HepG2 (cell line): ENCODE measurements at regions of chr11 and their contacts with region 1.

Region 1: GRCh38 chr11:27698872-27699474 is 1.3 kb downstream of the BDNF start:
- DNase-seq: peak; percentile 43
- ATAC-seq: peak; percentile 90
- H3K4me3 ChIP-seq: peak overlapping the region in 1 of 3 experiments; percentile 26; a peak in 1 of 6 replicates
- H3K27ac ChIP-seq: no peak overlapping the region
- H3K4me1 ChIP-seq: peaks cover 29% of the 10 kb centered on the region
- H3K27me3 ChIP-seq: peaks cover 0 to 36% of the 10 kb centered on the region in 2 experiments; a peak in 3 of 5 replicates
- CTCF ChIP-seq: peak; percentile 83
- EP300 ChIP-seq: no peak
- POLR2A ChIP-seq: no peak
- RAD21 ChIP-seq: peak; percentile 39; the same call in 1 of the 2 replicates

Region 2: DNA sequence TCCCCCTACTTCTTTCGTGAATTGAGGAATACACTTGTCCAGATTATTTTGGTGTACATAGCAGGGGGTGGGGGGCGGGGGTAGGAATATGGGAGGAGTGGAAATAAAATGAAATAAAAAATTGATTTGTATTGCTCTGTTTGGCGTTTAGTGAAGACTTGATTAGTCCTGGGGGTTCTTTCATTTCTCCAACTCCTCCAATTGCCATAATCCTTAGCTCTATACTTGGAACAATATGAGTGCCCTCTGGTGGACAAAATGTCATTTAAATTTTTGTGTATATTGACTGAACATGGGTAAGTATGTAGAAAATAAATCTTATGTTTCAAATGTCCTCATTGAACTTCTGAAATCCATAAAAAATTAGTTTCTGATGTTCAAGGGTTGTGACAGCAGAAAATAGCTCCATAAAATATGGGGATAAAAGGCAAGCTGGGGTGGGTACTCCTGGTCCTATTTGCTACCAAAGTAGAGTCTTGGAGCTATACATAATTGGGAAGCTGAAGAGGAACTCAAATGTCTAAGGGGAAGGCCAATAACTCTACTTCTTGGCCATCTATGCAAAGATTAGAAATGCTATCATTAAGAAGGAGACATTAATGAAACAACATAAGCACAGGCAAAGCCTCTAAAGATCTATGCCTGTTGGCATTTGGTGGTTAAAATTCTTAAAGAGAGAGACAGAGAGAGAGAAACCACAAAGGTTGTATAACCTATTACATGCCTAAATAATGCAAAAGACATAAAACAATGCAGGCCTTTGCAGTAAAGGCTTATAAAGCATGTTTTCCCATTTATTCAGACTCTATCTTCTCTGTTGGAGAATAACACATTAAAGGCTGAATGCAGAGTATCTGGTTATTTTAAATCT is 830.8 kb after region 1 on chr11:
- CTCF ChIA-PET with region 1: interaction called, 13 read pairs
- POLR2A ChIA-PET with region 1: no interaction called
- in situ Hi-C with region 1: loop called (anchors 5 kb)
- intact Hi-C with region 1: loop called (anchors 1 kb)
- DNase-seq: peak; percentile 50
- ATAC-seq: peak; percentile 67; the same call in 2 of the 3 replicates
- H3K4me3 ChIP-seq: no peak overlapping the region
- H3K27ac ChIP-seq: no peak overlapping the region
- H3K4me1 ChIP-seq: no peaks in the 10 kb centered on the region
- H3K27me3 ChIP-seq: no peaks in the 10 kb centered on the region
- CTCF ChIP-seq: peak; percentile 39
- EP300 ChIP-seq: no peak
- POLR2A ChIP-seq: no peak
- RAD21 ChIP-seq: no peak

Region 3: DNA sequence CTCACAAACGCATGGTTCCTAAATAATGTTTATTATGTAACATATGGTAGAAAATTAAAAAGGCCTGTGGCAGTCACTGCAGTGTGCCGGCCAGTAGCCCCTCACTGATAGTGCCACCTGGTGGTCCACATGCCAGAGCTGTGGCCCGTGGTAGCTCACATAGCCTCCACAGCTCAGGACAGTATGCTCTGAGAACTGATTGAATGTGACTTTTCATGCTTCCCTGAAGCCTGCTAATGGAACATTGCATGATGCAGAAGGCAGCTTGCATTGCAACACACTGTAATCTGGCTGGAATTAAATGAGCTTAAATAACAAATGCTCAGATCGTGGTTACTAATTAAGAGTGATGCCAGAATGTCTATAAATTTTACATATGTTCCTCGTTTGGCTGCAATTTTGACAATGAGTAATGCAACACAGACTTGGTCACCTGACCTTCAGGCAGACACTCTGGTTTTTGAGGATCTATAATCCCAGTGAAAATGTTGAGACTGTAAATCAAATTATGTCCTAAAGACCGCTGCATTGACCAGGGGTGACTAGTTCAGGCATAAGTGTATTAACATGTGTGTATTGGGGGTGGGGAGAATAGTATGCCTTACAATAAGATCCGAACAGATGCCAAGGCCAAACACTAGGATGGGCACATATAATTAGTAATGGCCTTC is 975.6 kb after region 1 on chr11:
- CTCF ChIA-PET with region 1: interaction called, 6 read pairs
- POLR2A ChIA-PET with region 1: no interaction called
- in situ Hi-C with region 1: loop called (anchors 5 kb)
- intact Hi-C with region 1: loop called (anchors 1 kb)
- DNase-seq: no peak
- ATAC-seq: peak; percentile 90
- H3K4me3 ChIP-seq: no peak overlapping the region
- H3K27ac ChIP-seq: no peak overlapping the region
- H3K4me1 ChIP-seq: no peaks in the 10 kb centered on the region
- H3K27me3 ChIP-seq: no peaks in the 10 kb centered on the region
- CTCF ChIP-seq: peak; percentile 59
- EP300 ChIP-seq: no peak
- POLR2A ChIP-seq: no peak
- RAD21 ChIP-seq: 0 out of 2 replicates have a peak, but pooled peaks have one; percentile 17

Region 4: DNA sequence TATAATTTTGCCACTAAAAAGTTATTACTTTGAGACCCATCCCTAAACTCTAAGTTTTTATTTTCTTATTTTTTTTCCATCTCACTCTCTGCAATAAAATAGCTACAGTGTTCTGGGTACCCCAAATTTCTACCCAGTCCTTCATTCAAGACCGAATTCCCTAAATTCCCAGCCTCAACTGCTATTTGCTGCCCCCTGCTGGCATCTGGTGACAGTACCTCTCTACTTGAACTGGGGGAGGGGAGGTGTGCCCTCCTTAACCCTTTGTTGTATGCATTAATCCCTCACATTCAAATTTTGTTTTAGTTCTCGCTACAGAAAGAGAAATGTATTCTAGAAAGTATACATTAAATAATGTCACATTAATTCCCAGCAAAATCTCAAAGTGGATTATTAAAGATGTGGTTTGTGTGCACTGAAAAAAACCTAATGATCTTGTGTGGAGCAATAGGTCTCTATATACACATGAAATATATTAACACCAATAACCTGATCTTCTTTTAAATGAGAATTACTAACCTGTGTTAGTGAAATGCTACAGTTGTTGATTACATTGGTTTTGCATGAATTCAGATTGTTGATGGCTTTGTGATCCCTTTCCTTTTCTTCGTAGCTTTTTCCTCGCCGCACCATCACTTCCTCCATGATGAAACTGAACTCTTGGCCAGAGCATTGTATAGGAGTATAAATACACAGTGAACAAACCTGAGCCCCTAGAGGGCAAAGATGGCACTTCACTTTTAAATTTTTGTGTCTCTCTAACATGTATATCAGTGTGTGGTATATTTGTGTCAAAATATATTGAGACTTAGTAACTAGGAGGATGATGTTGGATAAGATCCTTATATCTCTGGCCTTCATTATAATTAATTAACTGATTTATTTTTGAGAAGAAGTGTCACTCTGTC is 999.2 kb after region 1 on chr11:
- CTCF ChIA-PET with region 1: interaction called, 5 read pairs
- POLR2A ChIA-PET with region 1: no interaction called
- in situ Hi-C with region 1: no loop called
- intact Hi-C with region 1: loop called (anchors 1 kb)
- DNase-seq: peak; percentile 41
- ATAC-seq: peak; percentile 74
- H3K4me3 ChIP-seq: no peak overlapping the region
- H3K27ac ChIP-seq: no peak overlapping the region
- H3K4me1 ChIP-seq: no peaks in the 10 kb centered on the region
- H3K27me3 ChIP-seq: no peaks in the 10 kb centered on the region
- CTCF ChIP-seq: peak; percentile 80
- EP300 ChIP-seq: no peak
- POLR2A ChIP-seq: no peak
- RAD21 ChIP-seq: peak; percentile 27; the same call in 1 of the 2 replicates

Region 5: DNA sequence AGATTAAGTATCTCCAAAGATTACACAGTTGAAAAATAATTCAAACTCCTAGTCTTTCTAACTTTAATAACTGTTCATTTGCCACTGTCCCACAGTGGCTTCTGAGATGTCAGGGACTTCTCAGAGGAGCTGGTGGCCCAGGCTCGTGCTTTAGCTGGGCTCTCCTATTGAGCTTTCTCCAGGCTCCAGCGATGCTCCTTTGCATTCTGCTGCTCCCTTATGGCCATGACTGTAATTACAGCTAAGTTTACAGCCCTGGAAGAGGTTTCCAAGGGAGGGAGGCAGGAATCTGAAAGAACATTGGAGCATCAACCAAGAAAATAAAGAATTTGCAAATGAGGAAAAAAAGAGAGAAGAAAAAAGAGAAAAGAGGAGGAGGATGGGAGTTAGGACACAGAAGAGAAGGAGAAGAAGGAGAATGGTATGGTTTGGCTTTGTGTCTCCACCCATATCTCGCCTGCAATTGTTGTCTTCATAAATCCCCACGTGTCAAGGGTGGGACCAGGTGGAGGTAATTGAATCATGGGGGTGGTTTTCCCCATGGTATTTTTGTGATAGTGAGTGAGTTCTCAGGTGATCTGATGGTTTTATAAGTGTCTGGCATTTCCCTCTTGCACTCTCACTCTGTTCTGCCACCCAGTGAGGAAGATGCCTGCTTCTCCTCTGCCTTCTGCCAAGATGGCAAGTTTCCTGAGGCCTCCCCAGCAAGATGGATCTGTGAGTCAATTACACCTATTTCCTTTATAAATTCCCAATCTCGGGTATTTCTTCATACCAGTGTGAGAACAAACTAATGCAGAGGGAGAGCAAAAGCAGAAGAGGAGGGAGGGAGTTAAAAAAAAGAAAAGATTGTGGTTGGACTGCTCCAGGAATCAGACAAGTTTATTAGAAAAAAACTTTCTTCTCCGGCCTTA is 1460.8 kb after region 1 on chr11:
- CTCF ChIA-PET with region 1: interaction called, 5 read pairs
- POLR2A ChIA-PET with region 1: no interaction called
- in situ Hi-C with region 1: loop called (anchors 25 kb)
- intact Hi-C with region 1: loop called (anchors 1 kb)
- DNase-seq: peak; percentile 20
- ATAC-seq: peak; percentile 94
- H3K4me3 ChIP-seq: no peak overlapping the region
- H3K27ac ChIP-seq: no peak overlapping the region
- H3K4me1 ChIP-seq: no peaks in the 10 kb centered on the region
- H3K27me3 ChIP-seq: no peaks in the 10 kb centered on the region
- CTCF ChIP-seq: peak; percentile 78
- EP300 ChIP-seq: no peak
- POLR2A ChIP-seq: no peak
- RAD21 ChIP-seq: 0 out of 2 replicates have a peak, but pooled peaks have one; percentile 25

Region 6: DNA sequence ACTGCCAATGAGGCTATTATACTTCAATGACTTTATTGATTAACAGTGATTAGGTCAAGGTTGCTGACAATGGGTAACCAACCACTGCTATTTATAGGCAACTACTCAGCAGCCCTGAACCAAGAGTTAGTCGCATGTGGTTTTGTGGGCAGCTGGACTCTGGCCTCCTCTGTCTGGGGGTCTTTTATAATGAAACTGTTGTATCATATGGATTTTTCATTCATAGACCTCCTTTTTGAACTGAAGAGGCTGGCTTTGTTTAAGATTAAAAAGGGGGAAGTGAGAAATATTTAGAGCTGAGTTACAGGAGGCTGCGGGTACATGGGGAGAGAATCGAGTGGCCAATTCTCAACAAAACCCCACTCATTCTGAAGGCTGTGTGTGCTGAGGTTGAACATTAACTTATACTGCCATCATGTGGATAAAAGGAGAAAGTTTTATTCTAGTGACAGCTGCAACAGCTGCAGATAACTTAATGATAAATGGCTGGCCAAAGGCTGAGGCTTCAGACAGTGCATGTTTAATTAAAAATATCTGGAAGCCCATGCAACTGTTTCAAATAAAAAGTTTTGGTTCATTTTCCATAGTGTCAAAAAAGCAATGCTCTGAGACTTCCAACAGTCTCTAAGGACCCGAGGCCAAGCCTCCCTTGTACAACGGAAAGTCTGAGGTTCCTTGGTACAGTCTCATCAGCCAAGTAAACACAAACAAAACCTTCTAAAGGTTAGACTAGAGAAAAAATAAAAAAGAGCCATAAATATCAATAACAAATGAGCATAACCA is 1635.2 kb after region 1 on chr11:
- CTCF ChIA-PET with region 1: interaction called, 3 read pairs
- POLR2A ChIA-PET with region 1: no interaction called
- in situ Hi-C with region 1: loop called (anchors 10 kb)
- intact Hi-C with region 1: loop called (anchors 1 kb)
- DNase-seq: peak; percentile 32
- ATAC-seq: peak; percentile 91
- H3K4me3 ChIP-seq: no peak overlapping the region
- H3K27ac ChIP-seq: no peak overlapping the region
- H3K4me1 ChIP-seq: no peaks in the 10 kb centered on the region; the same call in 1 of the 2 replicates
- H3K27me3 ChIP-seq: peaks cover 0 to 1% of the 10 kb centered on the region in 2 experiments; a peak in 1 of 5 replicates
- CTCF ChIP-seq: peak; percentile 69
- EP300 ChIP-seq: no peak
- POLR2A ChIP-seq: no peak
- RAD21 ChIP-seq: peak; percentile 54